Head of caudate nucleus (tissue), 42 donors: ENCODE measurements at regions of chr12 and their contacts with region 1.

Region 1: GRCh38 chr12:52976147-52977071 is 27.5 kb downstream of the KRT18 start:
- DNase-seq: peak in 41 of 42 donors; percentile 6 to 81 (median 45)

Region 2: GRCh38 chr12:52139552-52140062 is 836.8 kb before region 1 on chr12:
- intact Hi-C with region 1: loop called (anchors 10 kb)
- DNase-seq: peak in 27 of 42 donors; percentile 15 to 61 (median 37)

Region 3: GRCh38 chr12:52884526-52885293 is 91.7 kb before region 1 on chr12:
- intact Hi-C with region 1: loop called (anchors 5 kb)
- DNase-seq: peak; percentile 44 to 91 (median 80)

Region 4: GRCh38 chr12:53014709-53015108 is 38.3 kb after region 1 on chr12:
- intact Hi-C with region 1: no loop called
- DNase-seq: no peak